Right cardiac atrium (tissue), 5 donors: ENCODE measurements at regions of chr19 and their contacts with region 1.

Region 1: DNA sequence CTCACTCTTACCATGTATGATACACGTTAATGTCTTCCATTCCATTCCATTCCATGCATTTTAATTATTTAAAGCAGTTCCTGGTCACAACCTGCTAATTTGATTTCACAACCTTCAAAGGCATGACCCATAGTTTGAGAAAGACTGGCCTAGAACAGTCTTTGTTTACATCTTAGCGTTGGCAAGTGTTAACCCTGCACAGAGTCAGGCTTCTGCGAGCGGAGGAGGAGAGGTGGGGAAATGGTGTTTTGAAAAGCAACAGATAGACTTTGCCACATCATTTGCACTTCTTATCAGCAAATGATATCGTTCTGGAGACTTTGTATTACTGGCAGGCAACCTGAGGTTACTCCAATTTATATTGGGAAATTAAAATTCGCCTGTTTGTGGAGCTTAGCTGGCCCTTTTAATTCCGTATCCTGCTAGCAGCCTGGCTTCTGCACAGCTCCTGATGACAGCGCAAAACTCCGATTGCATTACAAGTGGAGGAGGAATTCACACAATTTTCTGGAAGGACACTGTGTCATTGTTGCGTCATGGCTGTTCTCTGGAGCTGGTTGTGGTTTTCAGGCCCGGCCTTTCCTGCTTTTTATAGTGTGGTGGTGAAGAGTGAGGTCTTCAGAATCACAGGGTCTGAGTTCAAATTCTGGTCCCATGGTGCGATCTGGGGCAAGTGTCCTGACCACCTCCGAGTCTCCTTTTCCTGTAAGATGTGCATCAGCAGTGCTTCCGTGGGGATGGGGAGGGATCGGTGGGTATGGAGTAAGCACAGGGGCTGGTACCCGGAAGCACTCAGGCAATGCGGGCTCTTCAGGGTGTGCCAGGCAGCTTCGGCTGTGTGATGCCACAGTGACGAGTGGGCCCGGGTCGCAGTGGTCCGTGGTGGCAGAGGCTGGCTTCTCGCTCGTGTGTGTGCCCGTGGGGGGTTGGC is 49.1 kb upstream of the EHD2 start:
- DNase-seq: peak; percentile 82 to 91 (median 85)
- ATAC-seq: peak; percentile 84 to 90
- H3K4me3 ChIP-seq: no peak overlapping the region
- H3K27ac ChIP-seq: peak overlapping the region; percentile 95
- H3K4me1 ChIP-seq: peaks cover 35% of the 10 kb centered on the region
- H3K27me3 ChIP-seq: no peaks in the 10 kb centered on the region

Region 2: DNA sequence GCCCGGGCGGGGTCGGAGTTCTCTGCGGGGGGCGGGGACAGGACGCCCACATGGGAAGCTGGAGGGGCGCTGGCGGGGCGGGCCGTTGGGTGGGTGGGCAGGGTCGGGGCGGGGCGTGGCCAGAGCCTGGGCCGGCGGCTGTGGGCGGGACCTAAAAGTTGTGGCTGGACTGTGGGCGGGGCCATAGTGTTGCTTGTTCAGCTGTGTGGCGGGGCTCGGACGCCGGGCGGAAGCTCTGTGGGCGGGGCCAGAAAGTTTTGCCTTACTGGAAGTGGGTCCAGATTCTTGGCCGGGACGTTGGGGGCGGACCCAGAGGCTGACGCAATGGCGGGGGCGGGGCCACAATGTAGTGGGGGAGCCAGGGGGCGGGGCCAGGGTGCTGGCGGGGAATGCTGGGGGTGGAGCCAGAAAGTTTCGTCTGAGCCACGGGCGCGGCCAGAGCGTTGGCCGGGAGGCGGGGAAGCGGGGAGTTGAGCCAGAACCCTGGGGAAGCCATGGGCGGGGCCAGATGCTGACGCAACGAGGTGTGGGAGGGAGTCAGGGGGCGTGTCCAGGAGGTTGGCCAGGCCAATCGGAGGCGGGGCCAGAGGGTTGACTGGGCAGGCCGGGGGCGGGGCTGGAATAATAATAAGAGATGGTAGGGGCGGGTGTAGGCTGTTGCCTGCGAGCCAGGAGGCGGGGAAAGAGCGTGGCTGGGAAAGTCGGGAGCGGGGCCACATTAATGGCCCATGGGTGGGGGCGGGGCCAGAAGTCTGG is 407.2 kb before region 1 on chr19:
- intact Hi-C with region 1: no loop called
- DNase-seq: peak; percentile 100
- ATAC-seq: peak; percentile 87 to 90
- H3K4me3 ChIP-seq: peak overlapping the region; percentile 86
- H3K27ac ChIP-seq: peak overlapping the region; percentile 96
- H3K4me1 ChIP-seq: peaks cover 4% of the 10 kb centered on the region
- H3K27me3 ChIP-seq: no peaks in the 10 kb centered on the region

Region 3: DNA sequence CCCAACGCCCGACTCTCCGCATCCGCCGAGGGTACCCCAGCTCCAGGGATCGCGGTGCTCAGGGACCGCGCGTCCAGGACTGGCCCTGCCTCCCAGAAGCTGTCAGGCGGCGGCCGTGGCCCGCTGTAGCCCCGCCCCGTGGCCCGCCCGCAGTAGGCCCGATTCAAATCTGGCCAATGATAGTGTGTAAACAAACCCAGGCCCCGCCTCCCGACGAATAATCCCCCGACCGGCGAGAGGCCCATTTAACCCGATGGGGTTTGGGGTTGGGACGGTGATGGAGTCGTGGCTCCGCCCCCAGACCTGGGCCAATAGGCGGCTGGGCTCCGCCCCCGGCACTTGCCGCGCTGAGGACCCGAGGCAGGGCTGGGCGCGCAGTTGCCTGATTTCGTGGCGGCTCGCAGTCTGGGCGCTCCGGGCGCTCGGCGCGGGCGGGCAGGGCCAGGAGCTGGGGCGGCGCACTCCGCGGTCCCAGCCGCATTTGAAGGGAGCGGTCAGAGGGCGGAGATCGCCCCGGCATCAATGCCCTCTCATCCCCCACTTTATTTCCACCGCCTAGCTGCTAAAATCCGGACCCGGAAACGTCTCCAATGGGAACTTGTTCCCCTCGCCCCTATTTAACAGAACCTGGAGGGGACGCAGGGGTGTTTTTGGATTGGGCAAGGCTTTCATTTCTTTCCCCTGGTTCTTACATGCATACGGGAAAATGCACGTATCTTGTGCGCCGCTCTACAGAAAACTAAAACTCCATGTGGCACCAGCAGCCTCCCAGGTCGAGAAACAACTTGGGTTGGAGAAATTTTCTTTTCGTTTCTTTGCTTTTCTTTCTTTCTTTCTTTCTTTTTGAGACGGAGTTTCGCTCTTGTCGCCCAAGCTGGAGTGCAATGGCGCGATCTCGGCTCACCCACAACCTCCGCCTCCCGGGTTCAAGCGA is 63.6 kb before region 1 on chr19:
- intact Hi-C with region 1: loop called in 1 of 4 experiments (anchors 10 kb)
- DNase-seq: peak; percentile 100
- ATAC-seq: peak; percentile 99
- H3K4me3 ChIP-seq: peak overlapping the region; percentile 81
- H3K27ac ChIP-seq: peak overlapping the region; percentile 97
- H3K4me1 ChIP-seq: peaks cover 2% of the 10 kb centered on the region
- H3K27me3 ChIP-seq: no peaks in the 10 kb centered on the region

Region 4: GRCh38 chr19:47608074-47608918 is 55.8 kb before region 1 on chr19:
- intact Hi-C with region 1: loop called in 3 of 4 experiments (anchors 5 to 10 kb)
- DNase-seq: peak; percentile 95 to 99 (median 98)
- ATAC-seq: peak; percentile 96
- H3K4me3 ChIP-seq: peak overlapping the region; percentile 57
- H3K27ac ChIP-seq: peak overlapping the region; percentile 88
- H3K4me1 ChIP-seq: no peaks in the 10 kb centered on the region
- H3K27me3 ChIP-seq: no peaks in the 10 kb centered on the region